Right lobe of liver (tissue), 6 donors: ENCODE measurements at regions of chr2 and their contacts with region 1.

Region 1: DNA sequence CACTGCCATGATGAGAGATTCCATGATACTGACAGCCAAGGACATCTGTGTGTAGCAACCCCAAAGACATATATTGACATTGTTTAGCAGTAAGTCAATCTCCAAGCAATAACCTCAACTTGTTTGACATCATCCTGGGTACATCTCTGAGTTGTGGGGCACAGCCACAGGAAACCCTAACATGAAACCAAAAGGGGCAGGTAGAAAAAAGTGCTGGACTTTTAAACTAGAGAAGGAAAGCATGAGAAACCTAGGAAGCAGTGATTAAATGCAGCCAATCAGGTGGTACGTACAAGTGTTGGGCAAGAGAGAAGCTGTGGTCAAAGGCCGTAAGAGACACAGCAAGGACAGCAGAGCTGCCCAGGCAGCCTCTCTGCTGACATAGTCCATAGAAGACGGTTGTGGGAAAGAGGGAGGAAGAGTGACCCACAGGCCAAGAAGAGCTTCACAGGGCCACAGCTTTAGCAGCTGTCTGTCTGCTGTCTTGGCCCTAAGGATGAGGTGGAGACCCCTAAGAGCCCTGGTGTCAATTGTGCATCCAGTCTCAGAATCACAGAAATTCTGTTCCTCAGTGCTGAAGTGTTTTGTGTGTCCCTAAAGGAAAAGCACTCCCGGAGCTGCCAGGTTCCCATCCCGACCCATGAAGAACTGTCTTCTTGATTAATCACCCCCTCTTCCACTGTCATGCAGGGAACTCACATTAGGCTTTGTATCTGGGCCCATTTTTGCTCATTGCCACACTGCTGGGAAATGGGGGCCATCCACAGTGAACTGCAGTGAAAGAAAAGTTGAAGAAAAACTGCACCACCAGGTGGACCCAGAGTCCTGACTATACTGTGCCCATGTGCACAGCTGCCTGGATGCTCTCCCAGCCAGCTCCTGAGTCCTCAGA is 25.4 kb upstream of the CHN1 start:
- DNase-seq: peak; percentile 48 to 83 (median 72)
- ATAC-seq: peak; percentile 92 to 96 (median 94)
- H3K4me3 ChIP-seq: no peak overlapping the region
- H3K27ac ChIP-seq: peak overlapping the region in 1 of 3 donors; percentile 56
- H3K4me1 ChIP-seq: peaks cover 0 to 13% (median 0%) of the 10 kb centered on the region in 4 donors
- H3K27me3 ChIP-seq: no peaks in the 10 kb centered on the region
- CTCF ChIP-seq: peak in 3 of 4 donors; percentile 22 to 39 (median 39)
- POLR2A ChIP-seq: peak; percentile 13

Region 2: GRCh38 chr2:175293776-175294175 is 263.1 kb after region 1 on chr2:
- intact Hi-C with region 1: loop called in 1 of 2 experiments (anchors 10 kb)
- DNase-seq: no peak
- ATAC-seq: no peak
- H3K4me3 ChIP-seq: no peak overlapping the region
- H3K27ac ChIP-seq: no peak overlapping the region
- H3K4me1 ChIP-seq: no peaks in the 10 kb centered on the region
- H3K27me3 ChIP-seq: peaks cover 0 to 5% of the 10 kb centered on the region in 2 donors
- CTCF ChIP-seq: no peak
- POLR2A ChIP-seq: no peak